SK-MEL-5 (cell line): ENCODE measurements at regions of chr18 and their contacts with region 1.

Region 1: GRCh38 chr18:59988098-59988706 is 88.4 kb downstream of the PMAIP1 start:
- DNase-seq: peak; percentile 53

Region 2: DNA sequence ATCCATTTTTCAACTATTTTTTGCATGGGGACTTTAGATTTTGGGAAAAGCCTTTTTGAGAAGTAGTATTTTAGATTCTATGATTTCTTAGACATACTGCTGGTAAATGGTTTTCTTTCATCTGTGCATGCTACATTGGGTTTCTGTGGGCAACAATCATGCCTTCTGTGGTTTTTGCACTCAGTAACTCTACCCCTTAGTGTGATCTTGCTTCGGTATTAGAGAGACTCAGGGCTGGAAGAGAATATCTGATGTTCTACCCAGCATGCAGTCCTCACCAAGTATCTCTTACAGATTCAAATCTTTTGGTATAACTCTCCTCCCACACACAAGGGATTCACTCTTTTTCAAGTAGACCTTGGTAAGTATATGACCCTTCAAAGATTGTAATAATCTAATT is 94.6 kb after region 1 on chr18:
- in situ Hi-C with region 1: no loop called
- DNase-seq: no peak

Region 3: DNA sequence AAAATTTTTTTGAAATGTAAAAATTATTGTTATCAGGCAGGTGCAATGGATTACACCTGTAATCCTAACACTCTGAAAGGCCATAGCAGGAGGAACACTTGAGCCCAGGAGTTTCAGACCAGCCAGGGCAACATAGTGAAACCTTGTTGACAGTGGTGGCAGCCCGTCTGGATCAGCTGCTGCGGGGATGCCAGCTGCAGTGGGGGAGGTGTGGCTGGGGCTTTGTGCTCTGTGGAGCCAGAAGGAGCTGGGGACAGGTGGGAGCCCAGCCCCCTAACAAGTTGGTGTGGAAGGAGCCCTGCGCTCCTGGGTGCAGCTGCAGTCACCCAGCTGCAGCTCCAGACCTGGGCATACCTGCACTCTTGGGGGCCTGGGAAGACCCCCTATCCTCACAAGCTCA is 566.8 kb after region 1 on chr18:
- in situ Hi-C with region 1: loop called (anchors 25 kb)
- DNase-seq: no peak